Transverse colon (tissue), 4 donors: ENCODE measurements at regions of chr20 and their contacts with region 1.

Region 1: DNA sequence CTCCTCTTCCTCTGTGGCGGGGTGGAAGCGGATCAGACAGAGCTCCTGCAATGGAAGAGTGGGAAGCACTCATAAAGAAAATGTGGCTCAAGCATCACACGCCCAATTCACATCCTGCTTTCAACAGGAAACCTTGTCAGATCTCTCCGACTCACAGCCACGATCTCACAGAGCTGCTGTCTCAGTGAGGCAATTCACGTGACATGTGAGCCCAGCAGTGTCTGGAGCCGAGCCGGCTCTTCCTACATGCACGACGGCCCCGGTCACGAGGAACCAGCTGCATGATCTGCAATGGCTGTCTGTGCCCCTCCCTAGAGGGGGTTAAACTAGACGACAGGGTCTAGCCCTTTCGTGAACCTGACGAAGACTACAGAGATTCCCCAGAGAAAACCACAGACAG is 29.5 kb upstream of the TCFL5 start:
- DNase-seq: no peak
- H3K4me3 ChIP-seq: no peak overlapping the region
- H3K27ac ChIP-seq: no peak overlapping the region
- H3K4me1 ChIP-seq: peaks cover 4 to 12% (median 7%) of the 10 kb centered on the region in 4 donors
- H3K27me3 ChIP-seq: no peaks in the 10 kb centered on the region
- CTCF ChIP-seq: no peak
- EP300 ChIP-seq: no peak
- POLR2A ChIP-seq: no peak

Region 2: DNA sequence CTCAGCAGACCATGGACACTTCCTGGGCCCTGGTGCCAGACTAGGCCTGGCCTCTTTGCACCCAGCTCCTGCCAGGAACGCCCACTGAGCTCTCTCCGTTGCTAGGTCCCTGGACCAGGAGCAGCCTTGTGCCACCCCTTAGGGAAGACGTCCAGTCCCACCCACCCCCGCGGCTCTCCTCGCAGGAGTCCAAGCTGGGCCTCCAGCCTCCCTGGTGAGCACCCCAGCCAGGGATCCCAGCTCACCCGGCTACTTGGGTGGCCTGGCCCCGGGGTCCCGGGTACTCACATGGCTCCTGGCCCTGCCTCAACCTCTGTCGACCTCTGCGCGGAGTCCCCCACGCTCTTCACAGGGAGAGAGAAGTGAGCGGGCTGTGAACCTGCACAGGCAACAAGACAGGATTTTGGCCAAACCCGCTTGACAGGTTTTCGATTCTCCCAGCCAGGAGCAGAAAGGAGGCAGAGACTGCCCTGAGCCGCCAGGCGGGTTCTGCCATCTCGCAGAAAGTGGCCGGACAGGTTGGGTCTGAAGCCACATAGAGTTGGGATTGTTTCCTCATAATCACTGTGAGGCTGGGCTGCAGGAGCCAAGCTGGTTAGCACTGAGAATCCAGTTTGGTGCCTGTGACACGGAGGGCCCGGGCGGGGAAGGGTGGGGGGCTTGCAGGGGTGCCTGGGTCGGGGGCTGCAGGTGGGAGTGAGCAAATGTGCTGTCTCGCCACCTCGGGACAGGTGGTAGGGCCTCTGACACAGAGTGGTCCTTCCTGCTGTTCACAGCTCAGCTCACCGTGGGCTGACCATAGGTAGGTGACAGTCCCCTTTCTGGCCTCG is 463.7 kb before region 1 on chr20 and contains the start of gene RBBP8NL:
- in situ Hi-C with region 1: no loop called
- intact Hi-C with region 1: loop called (anchors 5 kb)
- DNase-seq: peak; percentile 92
- H3K4me3 ChIP-seq: peak within 1 kb of the TSS in 2 of 4 donors; percentile 13 to 30
- H3K27ac ChIP-seq: peak within 1 kb of the TSS; percentile 54 to 86 (median 68)
- H3K4me1 ChIP-seq: peaks cover 0 to 31% (median 18%) of the 10 kb centered on the region in 4 donors
- H3K27me3 ChIP-seq: no peaks in the 10 kb centered on the region
- CTCF ChIP-seq: peak in 3 of 5 experiments; percentile 17 to 52 (median 43)
- EP300 ChIP-seq: no peak
- POLR2A ChIP-seq: no peak
- total RNA-seq, gene RBBP8NL: 0.75 to 9.4 (median 4.3) TPM

Region 3: GRCh38 chr20:62832212-62832922 is 58.7 kb before region 1 on chr20:
- in situ Hi-C with region 1: no loop called
- intact Hi-C with region 1: no loop called
- DNase-seq: peak; percentile 82
- H3K4me3 ChIP-seq: peak overlapping the region in 1 of 4 donors; percentile 11
- H3K27ac ChIP-seq: peak overlapping the region; percentile 6 to 83 (median 75)
- H3K4me1 ChIP-seq: peaks cover 20 to 30% (median 26%) of the 10 kb centered on the region in 4 donors
- H3K27me3 ChIP-seq: peaks cover 13% of the 10 kb centered on the region
- CTCF ChIP-seq: no peak
- EP300 ChIP-seq: no peak
- POLR2A ChIP-seq: no peak

Region 4: DNA sequence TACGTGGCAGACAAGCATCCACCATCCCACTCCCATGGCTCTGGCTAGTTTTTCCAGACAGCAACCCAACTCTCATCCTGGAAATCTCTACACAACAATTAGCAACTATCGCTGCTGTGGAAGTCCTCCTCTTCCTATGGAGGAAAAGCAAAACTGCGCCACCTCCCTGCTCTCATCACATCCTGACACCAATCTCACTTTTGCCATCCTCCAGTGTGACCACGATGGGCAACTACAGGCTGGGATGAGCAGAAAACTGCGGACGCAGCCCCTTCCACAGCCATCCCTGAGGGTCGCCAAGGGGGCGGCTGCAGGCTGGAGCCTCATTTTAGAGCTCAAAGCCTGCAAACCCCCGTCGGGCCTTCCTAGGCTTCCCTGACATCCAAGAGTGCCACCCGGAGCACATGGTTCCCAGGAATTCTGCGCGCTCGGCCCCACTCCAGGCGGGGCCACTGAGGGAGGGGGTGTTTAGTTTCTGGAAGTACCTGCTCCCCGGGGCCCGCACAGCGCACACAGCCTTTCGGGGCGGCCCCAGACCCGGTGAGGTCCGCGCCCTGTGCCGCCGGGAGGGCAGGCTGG is 30.7 kb before region 1 on chr20:
- in situ Hi-C with region 1: no loop called
- intact Hi-C with region 1: no loop called
- DNase-seq: no peak
- H3K4me3 ChIP-seq: peak overlapping the region in 3 of 4 donors; percentile 14 to 50 (median 47)
- H3K27ac ChIP-seq: no peak overlapping the region
- H3K4me1 ChIP-seq: peaks cover 7 to 13% (median 9%) of the 10 kb centered on the region in 4 donors
- H3K27me3 ChIP-seq: peaks cover 4% of the 10 kb centered on the region
- CTCF ChIP-seq: no peak
- EP300 ChIP-seq: no peak
- POLR2A ChIP-seq: no peak